ENCODE measurements at regions of chrX and their contacts with region 1.

Region 1: GRCh38 chrX:129905787-129906580 is at the start of gene UTP14A:
- DNase-seq: peak; percentile 57
- ATAC-seq: peak; percentile 95
- H3K4me3 Mint-ChIP-seq: peak within 1 kb of the TSS; percentile 88
- H3K27ac Mint-ChIP-seq: peak within 1 kb of the TSS; percentile 84
- H3K4me1 Mint-ChIP-seq: peaks cover 4% of the 10 kb centered on the region
- H3K27me3 Mint-ChIP-seq: no peaks in the 10 kb centered on the region
- CTCF ChIP-seq: no peak
- total RNA-seq, gene UTP14A: 33.0 and 33.6 TPM in 2 replicates

Region 2: DNA sequence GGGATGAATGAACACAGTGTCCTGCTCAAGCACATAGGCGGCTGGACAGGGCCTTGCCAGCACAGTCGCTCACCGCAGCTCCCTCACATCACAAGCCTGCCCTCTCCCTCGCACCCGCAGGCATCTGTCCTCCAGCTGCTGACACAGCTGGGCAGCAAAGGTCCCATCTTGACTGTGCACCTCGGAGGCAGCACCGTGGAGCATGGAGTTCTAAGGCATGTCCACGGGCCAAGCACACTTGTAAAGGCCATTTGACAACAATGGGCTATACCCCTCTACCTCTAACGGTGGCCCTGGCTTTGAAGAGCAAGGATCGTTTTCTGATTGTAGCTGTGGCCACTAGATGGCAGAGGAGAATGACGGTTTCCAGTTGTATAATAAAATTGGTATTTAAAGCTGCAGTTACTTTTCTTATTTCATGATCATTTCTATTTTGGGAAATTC is 305.0 kb before region 1 on chrX:
- CTCF ChIA-PET with region 1: interaction called, 3 read pairs
- POLR2A ChIA-PET with region 1: no interaction called
- intact Hi-C with region 1: loop called (anchors 5 kb)
- DNase-seq: no peak
- ATAC-seq: no peak
- H3K4me3 Mint-ChIP-seq: no peak overlapping the region
- H3K27ac Mint-ChIP-seq: no peak overlapping the region
- H3K4me1 Mint-ChIP-seq: peaks cover 17% of the 10 kb centered on the region
- H3K27me3 Mint-ChIP-seq: no peaks in the 10 kb centered on the region
- CTCF ChIP-seq: no peak

Region 3: DNA sequence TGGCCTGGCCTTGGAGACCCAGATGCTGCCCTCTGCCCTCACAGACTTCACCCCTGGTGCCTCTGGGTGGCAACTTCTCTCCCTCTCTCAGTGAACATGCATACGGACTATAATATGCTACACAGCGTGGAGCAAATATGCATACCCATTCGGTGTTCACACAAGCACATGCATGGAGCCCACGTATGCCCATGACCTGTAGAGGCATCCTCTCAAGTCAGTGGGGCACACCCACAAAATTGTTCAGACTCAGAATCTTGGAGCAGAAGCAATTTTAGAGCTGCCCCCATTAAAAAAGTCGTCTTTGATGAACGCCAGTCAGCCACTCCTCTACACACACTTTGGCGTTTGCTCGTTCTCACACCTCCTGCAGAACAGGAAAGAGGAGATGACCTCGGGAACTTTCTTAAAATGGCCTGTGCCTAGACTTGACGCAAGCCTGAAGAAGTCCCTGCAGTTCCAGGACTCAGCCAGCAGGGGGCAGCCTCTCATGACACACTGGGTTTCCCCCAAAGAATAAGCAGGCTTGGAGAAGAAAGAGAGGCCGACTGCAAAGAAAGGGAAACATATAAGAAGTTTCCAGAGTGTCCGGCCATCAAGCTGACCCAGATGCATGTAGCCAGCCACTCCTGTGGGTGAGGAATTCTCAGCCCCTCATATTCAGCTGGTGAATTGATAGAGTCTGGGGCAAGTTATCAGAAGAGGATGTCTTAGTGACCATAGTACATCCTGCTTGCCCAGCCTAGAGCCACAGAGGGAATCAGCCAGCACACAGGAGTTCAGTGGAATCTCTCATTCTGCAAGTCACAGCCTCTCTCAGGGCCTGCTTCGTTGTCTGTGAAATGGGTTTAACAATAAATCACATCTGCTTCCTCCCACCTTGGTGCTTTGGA is 268.5 kb before region 1 on chrX:
- CTCF ChIA-PET with region 1: no interaction called
- POLR2A ChIA-PET with region 1: no interaction called
- intact Hi-C with region 1: loop called (anchors 1 kb)
- DNase-seq: peak; percentile 58
- ATAC-seq: peak; percentile 67
- H3K4me3 Mint-ChIP-seq: no peak overlapping the region
- H3K27ac Mint-ChIP-seq: no peak overlapping the region
- H3K4me1 Mint-ChIP-seq: no peaks in the 10 kb centered on the region
- H3K27me3 Mint-ChIP-seq: no peaks in the 10 kb centered on the region
- CTCF ChIP-seq: no peak

Region 4: GRCh38 chrX:129678614-129679195 is 227.3 kb before region 1 on chrX:
- CTCF ChIA-PET with region 1: no interaction called
- POLR2A ChIA-PET with region 1: interaction called, 4 read pairs
- intact Hi-C with region 1: loop called (anchors 5 kb)
- DNase-seq: no peak
- ATAC-seq: peak; percentile 28
- H3K4me3 Mint-ChIP-seq: peak overlapping the region; percentile 78
- H3K27ac Mint-ChIP-seq: peak overlapping the region; percentile 65
- H3K4me1 Mint-ChIP-seq: peaks cover 14% of the 10 kb centered on the region
- H3K27me3 Mint-ChIP-seq: no peaks in the 10 kb centered on the region
- CTCF ChIP-seq: no peak

Region 5: DNA sequence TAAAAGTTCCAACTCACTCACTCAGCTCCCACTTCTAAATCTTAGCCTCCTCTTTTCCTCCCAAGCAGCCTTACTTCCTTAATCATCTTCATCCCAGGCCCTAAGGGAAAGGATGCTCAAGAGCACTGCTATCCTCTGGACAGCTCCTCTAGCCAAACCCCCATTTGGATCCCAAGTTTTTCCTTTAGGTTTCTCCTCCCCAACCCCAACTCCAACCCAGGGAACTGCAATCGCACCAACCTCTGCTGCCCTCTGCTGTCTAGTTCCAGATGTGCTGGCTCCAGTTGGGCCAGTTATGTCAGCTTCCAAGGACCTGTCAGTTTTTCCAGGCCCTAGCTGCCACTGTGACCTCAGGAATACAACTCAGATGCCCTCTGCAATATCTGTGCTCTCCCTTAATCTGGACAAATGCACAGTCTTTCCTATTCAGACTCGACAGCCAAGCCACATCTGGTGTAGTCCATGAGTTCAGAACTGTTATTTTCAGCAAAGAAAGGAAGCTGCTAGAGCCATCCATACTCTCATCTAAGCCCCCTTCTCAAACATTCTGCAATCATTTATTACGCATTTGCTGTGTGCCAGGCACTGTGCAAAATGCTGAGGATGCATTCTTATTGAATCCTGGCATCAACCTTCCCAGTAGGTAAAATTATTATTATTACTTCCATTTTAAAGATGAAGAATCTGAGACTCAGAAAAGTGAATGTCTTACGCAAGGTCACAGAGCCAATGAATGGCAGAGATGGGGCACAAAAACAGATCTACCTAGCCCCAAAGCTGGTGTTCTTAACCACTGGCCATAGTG is 179.5 kb before region 1 on chrX:
- CTCF ChIA-PET with region 1: no interaction called
- POLR2A ChIA-PET with region 1: no interaction called
- intact Hi-C with region 1: no loop called
- DNase-seq: no peak
- ATAC-seq: no peak
- H3K4me3 Mint-ChIP-seq: no peak overlapping the region
- H3K27ac Mint-ChIP-seq: no peak overlapping the region
- H3K4me1 Mint-ChIP-seq: peaks cover 15% of the 10 kb centered on the region
- H3K27me3 Mint-ChIP-seq: no peaks in the 10 kb centered on the region
- CTCF ChIP-seq: no peak

Region 6: DNA sequence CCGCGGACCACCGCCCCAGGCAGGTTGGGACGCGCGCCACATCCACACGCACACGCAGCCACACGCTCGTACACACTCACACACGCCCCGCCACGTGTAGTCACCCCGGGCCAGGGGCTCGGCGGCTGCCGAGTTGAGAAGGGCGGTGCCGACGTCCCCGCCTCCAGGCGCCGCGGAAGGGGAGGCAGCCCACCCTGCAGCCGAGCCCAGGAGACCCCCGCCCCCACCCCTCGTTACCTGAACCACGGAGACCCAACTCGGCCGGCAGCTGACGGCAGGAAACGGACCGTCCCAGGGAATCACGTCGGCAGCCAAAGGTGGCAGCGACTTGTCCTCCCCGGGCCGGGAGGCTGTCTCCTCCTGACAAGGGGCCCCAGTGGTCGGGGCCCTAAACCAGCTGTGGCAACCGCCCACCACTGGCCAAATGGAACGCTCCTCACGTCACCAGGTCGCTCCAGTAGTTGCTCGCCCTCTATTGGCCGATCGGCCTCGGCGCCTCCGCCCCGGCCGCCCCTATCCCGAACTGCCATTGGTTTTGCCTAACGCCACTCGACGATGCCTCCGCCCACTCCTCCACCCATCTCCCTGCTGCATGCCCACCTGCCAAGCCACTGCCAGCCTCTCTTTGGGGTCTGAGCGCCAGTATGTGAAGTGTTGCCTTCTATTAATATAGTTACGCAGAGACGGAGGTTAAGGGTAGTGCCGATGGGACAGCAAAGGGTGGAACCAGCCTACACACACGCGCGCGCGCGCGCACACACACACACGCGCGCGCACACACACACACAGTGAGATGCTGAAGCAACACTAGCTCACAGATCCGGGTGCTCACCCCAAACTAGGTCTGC is 62.3 kb before region 1 on chrX and contains the start of gene ZDHHC9:
- CTCF ChIA-PET with region 1: no interaction called
- POLR2A ChIA-PET with region 1: interaction called, 3 read pairs
- intact Hi-C with region 1: loop called (anchors 2 kb)
- DNase-seq: peak; percentile 74
- ATAC-seq: peak; percentile 99
- H3K4me3 Mint-ChIP-seq: peak within 1 kb of the TSS; percentile 94
- H3K27ac Mint-ChIP-seq: peak within 1 kb of the TSS; percentile 77
- H3K4me1 Mint-ChIP-seq: peaks cover 14% of the 10 kb centered on the region
- H3K27me3 Mint-ChIP-seq: no peaks in the 10 kb centered on the region
- CTCF ChIP-seq: no peak
- total RNA-seq, gene ZDHHC9: 3.9 and 4.2 TPM in 2 replicates

Region 7: DNA sequence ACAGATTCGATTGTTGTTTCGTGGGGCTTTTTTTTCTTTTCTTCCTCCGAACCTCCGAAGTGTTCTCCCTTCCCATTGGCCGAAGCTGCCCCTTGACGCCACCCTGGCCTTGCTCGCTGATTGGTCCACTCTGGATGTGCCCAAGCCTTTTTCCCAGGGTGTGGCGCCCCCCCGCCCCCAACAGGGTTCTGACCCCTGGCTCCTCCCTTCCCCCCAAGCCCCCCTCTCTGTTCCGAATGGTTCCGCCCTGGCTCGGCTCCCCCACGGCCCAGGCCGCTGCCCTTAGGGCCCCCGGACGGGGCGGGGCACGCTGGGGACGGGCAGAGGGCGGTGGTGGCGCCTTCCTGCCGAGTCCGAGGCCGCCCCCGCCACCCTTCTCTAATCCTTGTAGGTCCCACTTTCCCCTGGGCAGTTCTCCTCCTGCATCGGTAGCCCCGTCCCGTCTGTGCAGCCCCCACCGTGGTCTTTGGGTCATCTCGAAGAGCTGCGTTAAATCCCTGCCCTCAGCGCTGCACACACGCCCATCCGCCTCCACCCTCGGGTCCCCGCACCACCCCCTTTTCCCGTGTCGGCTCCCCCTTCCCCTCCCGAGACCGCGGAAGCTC is 25.5 kb after region 1 on chrX:
- CTCF ChIA-PET with region 1: no interaction called
- POLR2A ChIA-PET with region 1: interaction called, 6 read pairs
- intact Hi-C with region 1: loop called (anchors 1 kb)
- DNase-seq: peak; percentile 59
- ATAC-seq: peak; percentile 70
- H3K4me3 Mint-ChIP-seq: peak overlapping the region; percentile 86
- H3K27ac Mint-ChIP-seq: peak overlapping the region; percentile 90
- H3K4me1 Mint-ChIP-seq: peaks cover 5% of the 10 kb centered on the region
- H3K27me3 Mint-ChIP-seq: no peaks in the 10 kb centered on the region
- CTCF ChIP-seq: no peak